ENCODE measurements at regions of chr6 and their contacts with region 1.

Region 1: DNA sequence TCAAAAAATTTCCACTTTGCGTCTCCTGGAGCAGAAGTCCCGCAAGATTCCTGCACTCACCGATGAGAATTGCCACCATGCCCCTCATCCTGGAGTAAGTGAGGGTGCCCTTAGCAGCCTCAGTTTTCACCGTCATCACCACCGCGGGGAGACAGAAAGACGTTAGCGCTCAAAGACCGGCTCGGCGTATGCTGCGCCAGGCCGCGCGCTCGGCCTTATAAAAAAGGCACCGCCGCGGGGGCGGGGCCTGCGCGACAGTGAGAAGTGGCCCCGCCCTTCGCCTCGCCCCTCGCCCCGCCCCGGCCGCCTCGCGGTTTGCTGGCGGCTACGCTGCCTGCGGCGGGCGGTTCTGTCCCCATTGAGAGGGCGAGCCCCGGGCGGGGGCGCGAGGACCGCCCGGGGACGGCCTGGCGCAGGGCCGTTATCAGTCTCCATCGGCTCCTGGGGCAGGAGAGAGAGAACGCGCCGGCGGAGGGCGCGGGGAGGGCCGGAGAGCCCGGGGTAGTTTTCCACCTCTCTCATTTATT is 122.3 kb upstream of the SLC2A12 start:
- DNase-seq: peak; percentile 95
- ATAC-seq: peak; percentile 89
- H3K4me3 ChIP-seq: peak overlapping the region; percentile 75 to 97 (median 77)
- H3K4me3 Mint-ChIP-seq: peak overlapping the region; percentile 95
- H3K27ac ChIP-seq: peak overlapping the region; percentile 69 to 70
- H3K27ac Mint-ChIP-seq: peak overlapping the region; percentile 92
- H3K4me1 ChIP-seq: peaks cover 29 to 33% of the 10 kb centered on the region in 2 donors
- H3K4me1 Mint-ChIP-seq: peaks cover 46% of the 10 kb centered on the region
- H3K27me3 ChIP-seq: no peaks in the 10 kb centered on the region
- H3K27me3 Mint-ChIP-seq: peaks cover 12% of the 10 kb centered on the region
- CTCF ChIP-seq: no peak

Region 2: GRCh38 chr6:134161036-134161435 is 13.7 kb before region 1 on chr6:
- CTCF ChIA-PET with region 1: interaction called, 5 read pairs
- POLR2A ChIA-PET with region 1: no interaction called
- intact Hi-C with region 1: loop called (anchors 1 kb)
- DNase-seq: no peak
- ATAC-seq: no peak
- H3K4me3 ChIP-seq: no peak overlapping the region
- H3K4me3 Mint-ChIP-seq: no peak overlapping the region
- H3K27ac ChIP-seq: no peak overlapping the region
- H3K27ac Mint-ChIP-seq: no peak overlapping the region
- H3K4me1 ChIP-seq: no peaks in the 10 kb centered on the region
- H3K4me1 Mint-ChIP-seq: no peaks in the 10 kb centered on the region
- H3K27me3 ChIP-seq: no peaks in the 10 kb centered on the region
- H3K27me3 Mint-ChIP-seq: no peaks in the 10 kb centered on the region
- CTCF ChIP-seq: no peak

Region 3: GRCh38 chr6:134317471-134318131 is 142.9 kb after region 1 on chr6 and contains the start of gene SGK1:
- CTCF ChIA-PET with region 1: no interaction called
- POLR2A ChIA-PET with region 1: no interaction called
- intact Hi-C with region 1: loop called (anchors 5 kb)
- DNase-seq: peak; percentile 53
- ATAC-seq: peak; percentile 47
- H3K4me3 ChIP-seq: peak within 1 kb of the TSS; percentile 36 to 70 (median 51)
- H3K4me3 Mint-ChIP-seq: peak within 1 kb of the TSS; percentile 83
- H3K27ac ChIP-seq: no peak within 1 kb of the TSS
- H3K27ac Mint-ChIP-seq: no peak within 1 kb of the TSS
- H3K4me1 ChIP-seq: peaks cover 9 to 16% of the 10 kb centered on the region in 2 donors
- H3K4me1 Mint-ChIP-seq: peaks cover 16% of the 10 kb centered on the region
- H3K27me3 ChIP-seq: peaks cover 0 to 21% (median 17%) of the 10 kb centered on the region in 4 experiments
- H3K27me3 Mint-ChIP-seq: peaks cover 36% of the 10 kb centered on the region
- CTCF ChIP-seq: no peak
- total RNA-seq, gene SGK1: 32.4 and 37.3 TPM in 2 replicates

Region 4: DNA sequence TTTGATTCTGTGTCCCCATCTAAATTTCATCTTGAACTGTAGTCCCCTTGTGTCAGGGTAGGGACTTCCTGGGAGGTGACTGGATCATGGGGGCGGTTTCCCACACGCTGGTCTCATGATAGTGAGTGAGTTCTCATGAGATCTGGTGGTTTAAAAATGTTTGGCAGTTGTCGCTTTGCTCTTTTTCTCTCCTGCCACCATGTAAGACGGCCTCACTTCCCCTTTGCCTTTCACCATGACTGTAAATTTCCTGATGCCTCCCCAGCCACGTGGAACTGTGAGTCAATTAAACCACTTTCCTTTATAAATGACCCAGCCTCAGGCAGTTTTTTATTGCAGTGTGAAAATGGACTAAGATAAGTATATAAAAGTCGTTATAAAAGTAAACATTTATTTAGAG is 223.7 kb after region 1 on chr6:
- CTCF ChIA-PET with region 1: no interaction called
- POLR2A ChIA-PET with region 1: no interaction called
- intact Hi-C with region 1: no loop called
- DNase-seq: peak; percentile 54
- ATAC-seq: peak; percentile 43
- H3K4me3 ChIP-seq: no peak overlapping the region
- H3K4me3 Mint-ChIP-seq: peak overlapping the region; percentile 33
- H3K27ac ChIP-seq: peak overlapping the region in 1 of 2 donors; percentile 15
- H3K27ac Mint-ChIP-seq: peak overlapping the region; percentile 64
- H3K4me1 ChIP-seq: peaks cover 3 to 4% of the 10 kb centered on the region in 2 donors
- H3K4me1 Mint-ChIP-seq: peaks cover 13% of the 10 kb centered on the region
- H3K27me3 ChIP-seq: no peaks in the 10 kb centered on the region
- H3K27me3 Mint-ChIP-seq: no peaks in the 10 kb centered on the region
- CTCF ChIP-seq: no peak

Region 5: GRCh38 chr6:134436281-134436815 is 261.6 kb after region 1 on chr6:
- CTCF ChIA-PET with region 1: interaction called, 4 read pairs
- POLR2A ChIA-PET with region 1: no interaction called
- intact Hi-C with region 1: loop called (anchors 1 kb)
- DNase-seq: peak; percentile 27
- ATAC-seq: peak; percentile 79
- H3K4me3 ChIP-seq: peak overlapping the region in 3 of 5 experiments; percentile 12 to 31 (median 26)
- H3K4me3 Mint-ChIP-seq: peak overlapping the region; percentile 81
- H3K27ac ChIP-seq: no peak overlapping the region
- H3K27ac Mint-ChIP-seq: peak overlapping the region; percentile 84
- H3K4me1 ChIP-seq: peaks cover 6 to 14% of the 10 kb centered on the region in 2 donors
- H3K4me1 Mint-ChIP-seq: peaks cover 20% of the 10 kb centered on the region
- H3K27me3 ChIP-seq: no peaks in the 10 kb centered on the region
- H3K27me3 Mint-ChIP-seq: no peaks in the 10 kb centered on the region
- CTCF ChIP-seq: no peak

Region 6: GRCh38 chr6:134882426-134883038 is 707.8 kb after region 1 on chr6:
- CTCF ChIA-PET with region 1: interaction called, 15 read pairs
- POLR2A ChIA-PET with region 1: no interaction called
- intact Hi-C with region 1: no loop called
- DNase-seq: peak; percentile 65
- ATAC-seq: peak; percentile 54
- H3K4me3 ChIP-seq: no peak overlapping the region
- H3K4me3 Mint-ChIP-seq: no peak overlapping the region
- H3K27ac ChIP-seq: no peak overlapping the region
- H3K27ac Mint-ChIP-seq: no peak overlapping the region
- H3K4me1 ChIP-seq: peaks cover 0 to 3% of the 10 kb centered on the region in 2 donors
- H3K4me1 Mint-ChIP-seq: no peaks in the 10 kb centered on the region
- H3K27me3 ChIP-seq: peaks cover 0 to 5% (median 2%) of the 10 kb centered on the region in 4 experiments
- H3K27me3 Mint-ChIP-seq: peaks cover 21% of the 10 kb centered on the region
- CTCF ChIP-seq: peak; percentile 87